ENCODE measurements at regions of chr7 and their contacts with region 1.

Region 1: GRCh38 chr7:64625114-64626082 is 40.5 kb upstream of the ZNF107 start:
- DNase-seq: no peak
- ATAC-seq: no peak
- H3K4me3 Mint-ChIP-seq: no peak overlapping the region
- H3K27ac Mint-ChIP-seq: no peak overlapping the region
- H3K4me1 Mint-ChIP-seq: peaks cover 5% of the 10 kb centered on the region
- H3K27me3 Mint-ChIP-seq: no peaks in the 10 kb centered on the region
- CTCF ChIP-seq: peak; percentile 77

Region 2: DNA sequence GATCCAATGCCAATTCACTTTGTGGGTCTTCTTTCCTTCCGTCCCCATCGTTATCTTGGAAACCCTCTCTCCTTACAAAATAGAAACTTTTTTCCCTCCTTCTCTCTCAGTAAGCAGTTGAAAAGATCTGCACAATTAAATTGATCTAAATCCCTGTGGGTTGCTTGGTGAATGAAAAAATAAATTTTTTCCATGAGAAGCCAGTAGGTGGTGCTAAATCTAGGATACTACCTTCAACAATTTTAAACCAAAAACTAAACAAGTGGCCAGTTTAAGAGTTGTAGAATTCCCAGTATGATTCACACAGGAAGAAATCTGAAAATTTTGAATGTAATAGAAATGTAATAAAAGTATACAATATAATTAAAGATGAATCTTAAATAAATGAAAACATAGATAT is 1617.0 kb before region 1 on chr7:
- CTCF ChIA-PET with region 1: no interaction called
- POLR2A ChIA-PET with region 1: no interaction called
- intact Hi-C with region 1: loop called (anchors 1 kb)
- DNase-seq: no peak
- ATAC-seq: no peak
- H3K4me3 Mint-ChIP-seq: no peak overlapping the region
- H3K27ac Mint-ChIP-seq: no peak overlapping the region
- H3K4me1 Mint-ChIP-seq: no peaks in the 10 kb centered on the region
- H3K27me3 Mint-ChIP-seq: no peaks in the 10 kb centered on the region
- CTCF ChIP-seq: no peak

Region 3: DNA sequence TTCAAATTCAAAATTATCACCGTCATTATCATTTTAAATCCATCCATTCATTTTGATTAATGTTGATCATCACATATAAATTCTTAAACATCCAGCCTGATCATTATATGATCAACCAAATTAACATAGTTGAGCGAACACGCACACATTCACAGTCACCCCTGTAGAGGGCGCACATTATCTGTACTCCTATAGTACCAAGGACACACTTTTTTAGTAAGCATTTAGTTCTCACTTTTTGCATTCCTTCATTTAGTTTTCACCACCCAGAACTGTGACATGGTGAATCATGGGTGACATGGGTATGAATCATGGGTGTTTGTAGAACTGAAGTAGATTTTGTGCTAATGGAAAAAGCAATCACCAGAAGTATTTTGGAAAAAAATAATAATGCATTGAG is 444.4 kb before region 1 on chr7:
- CTCF ChIA-PET with region 1: interaction called, 3 read pairs
- POLR2A ChIA-PET with region 1: no interaction called
- intact Hi-C with region 1: loop called (anchors 1 kb)
- DNase-seq: no peak
- ATAC-seq: no peak
- H3K4me3 Mint-ChIP-seq: no peak overlapping the region
- H3K27ac Mint-ChIP-seq: no peak overlapping the region
- H3K4me1 Mint-ChIP-seq: no peaks in the 10 kb centered on the region
- H3K27me3 Mint-ChIP-seq: no peaks in the 10 kb centered on the region
- CTCF ChIP-seq: no peak

Region 4: DNA sequence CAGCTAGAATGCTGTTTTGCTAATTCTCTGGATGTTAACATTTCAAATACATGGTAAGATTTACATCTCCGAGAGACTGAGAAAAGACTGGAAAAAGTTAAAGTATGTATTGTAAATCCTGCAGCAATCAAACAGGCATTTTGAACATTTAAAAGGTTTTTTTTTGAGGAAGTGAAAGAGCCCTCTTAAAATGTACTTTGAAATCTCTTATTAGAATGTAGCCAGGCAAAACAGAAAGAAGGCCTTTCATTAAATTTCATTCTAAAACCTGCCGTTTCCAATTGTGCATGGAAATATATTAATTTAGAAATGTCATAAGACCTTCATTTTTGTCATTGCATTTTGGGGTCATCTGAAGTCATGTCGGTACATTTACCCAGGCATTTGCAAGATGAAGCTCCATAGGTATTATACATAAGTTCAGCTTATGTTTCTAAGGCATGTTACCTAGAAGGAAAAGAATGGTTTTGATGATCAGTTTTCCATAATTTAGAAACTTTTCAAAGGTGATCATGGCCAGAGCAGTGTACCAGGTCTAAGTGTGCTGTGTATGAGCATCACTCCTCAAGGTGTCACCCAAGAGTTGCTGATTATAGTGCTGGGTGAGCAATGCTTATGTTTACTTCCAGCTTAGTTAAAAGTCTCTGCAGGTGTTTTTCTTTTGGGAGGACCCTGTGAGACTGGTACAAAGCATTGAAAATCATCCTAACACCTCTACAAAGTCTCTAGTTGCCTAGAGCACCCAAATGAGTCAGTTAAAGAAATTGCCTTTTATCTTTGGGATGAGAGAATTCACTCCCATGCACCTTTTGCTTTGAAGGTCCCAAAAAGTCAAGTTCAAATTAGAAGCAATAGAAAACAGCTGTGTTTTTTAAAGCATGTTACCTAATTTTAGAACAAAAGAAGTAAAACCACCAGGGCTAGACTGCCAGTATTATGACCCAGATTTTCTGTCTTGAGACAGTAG is 304.6 kb before region 1 on chr7:
- CTCF ChIA-PET with region 1: interaction called, 3 read pairs
- POLR2A ChIA-PET with region 1: no interaction called
- intact Hi-C with region 1: loop called (anchors 1 kb)
- DNase-seq: no peak
- ATAC-seq: peak; percentile 61
- H3K4me3 Mint-ChIP-seq: peak overlapping the region; percentile 28
- H3K27ac Mint-ChIP-seq: peak overlapping the region; percentile 83
- H3K4me1 Mint-ChIP-seq: peaks cover 50% of the 10 kb centered on the region
- H3K27me3 Mint-ChIP-seq: no peaks in the 10 kb centered on the region
- CTCF ChIP-seq: no peak

Region 5: GRCh38 chr7:64611406-64612116 is 13.8 kb before region 1 on chr7:
- CTCF ChIA-PET with region 1: no interaction called
- POLR2A ChIA-PET with region 1: no interaction called
- intact Hi-C with region 1: no loop called
- DNase-seq: no peak
- ATAC-seq: no peak
- H3K4me3 Mint-ChIP-seq: no peak overlapping the region
- H3K27ac Mint-ChIP-seq: no peak overlapping the region
- H3K4me1 Mint-ChIP-seq: no peaks in the 10 kb centered on the region
- H3K27me3 Mint-ChIP-seq: no peaks in the 10 kb centered on the region
- CTCF ChIP-seq: no peak

Measured in activated B cell treated with CpG ODN at 0.5 μM for 24 hours (primary cell).